Activated naive CD4-positive, alpha-beta T cell treated with anti-CD3 and anti-CD28 coated beads for 36 hours (primary cell): ENCODE measurements at regions of chr12 and their contacts with region 1.

Region 1: GRCh38 chr12:117587631-117588287 is 226.3 kb upstream of the NOS1 start:
- DNase-seq: peak; percentile 61
- H3K4me3 Mint-ChIP-seq: no peak overlapping the region
- H3K27ac Mint-ChIP-seq: no peak overlapping the region
- H3K4me1 Mint-ChIP-seq: no peaks in the 10 kb centered on the region
- H3K27me3 Mint-ChIP-seq: peaks cover 16% of the 10 kb centered on the region

Region 2: GRCh38 chr12:117236456-117237001 is 351.2 kb before region 1 on chr12:
- CTCF ChIA-PET with region 1: interaction called, 4 read pairs
- intact Hi-C with region 1: loop called (anchors 1 kb)
- DNase-seq: peak; percentile 92
- H3K4me3 Mint-ChIP-seq: no peak overlapping the region
- H3K27ac Mint-ChIP-seq: no peak overlapping the region
- H3K4me1 Mint-ChIP-seq: no peaks in the 10 kb centered on the region
- H3K27me3 Mint-ChIP-seq: peaks cover 15% of the 10 kb centered on the region